ENCODE measurements at regions of chr5 and their contacts with region 1.

Region 1: GRCh38 chr5:57779383-57780223 is 297.0 kb upstream of the ACTBL2 start:
- DNase-seq: peak in 3 of 4 experiments; percentile 10 to 48 (median 11)
- ATAC-seq: peak; percentile 73
- H3K4me3 ChIP-seq: no peak overlapping the region
- H3K27ac ChIP-seq: no peak overlapping the region
- H3K4me1 ChIP-seq: no peaks in the 10 kb centered on the region
- H3K27me3 ChIP-seq: no peaks in the 10 kb centered on the region
- CTCF ChIP-seq: peak; percentile 44 to 61 (median 51); a peak in 5 of 6 replicates
- EP300 ChIP-seq: no peak
- POLR2A ChIP-seq: no peak
- RAD21 ChIP-seq: peak; percentile 64 to 75

Region 2: DNA sequence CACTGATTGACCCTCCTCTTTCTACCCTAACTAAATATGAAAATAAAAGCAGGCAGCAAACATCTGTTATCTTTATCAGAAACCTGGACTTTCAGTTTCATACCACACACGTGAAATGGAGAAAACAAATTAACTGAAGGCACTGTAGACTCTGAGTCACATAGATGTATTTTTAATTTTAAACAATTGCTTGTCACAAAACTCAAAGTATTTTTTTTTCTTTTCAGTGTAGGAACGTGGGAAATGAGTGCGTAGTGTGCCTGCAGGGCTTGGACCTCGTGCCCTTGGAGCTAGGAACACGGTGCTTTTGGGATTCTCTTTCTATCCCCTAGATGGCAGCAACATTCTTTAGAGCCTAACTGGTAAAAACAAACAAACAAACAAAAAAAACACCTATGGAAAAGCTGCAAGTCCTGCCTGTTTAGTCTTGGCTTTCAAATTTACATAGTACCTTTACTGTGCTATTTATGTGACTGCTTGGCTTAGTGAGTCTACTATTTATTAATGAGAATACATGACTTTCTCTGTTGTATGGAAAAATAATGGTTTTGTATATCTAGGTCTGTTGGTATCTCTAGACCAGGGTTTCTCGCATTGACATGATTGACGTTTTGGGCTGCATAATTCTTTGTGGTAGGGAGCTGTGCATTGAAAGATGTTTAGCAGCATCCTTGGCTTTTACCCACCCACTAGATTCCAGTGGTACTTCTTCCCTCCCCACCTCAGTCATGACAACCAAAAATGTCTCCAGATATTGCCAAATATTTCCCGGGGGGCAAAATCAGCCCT is 280.1 kb before region 1 on chr5:
- CTCF ChIA-PET with region 1: no interaction called
- POLR2A ChIA-PET with region 1: no interaction called
- in situ Hi-C with region 1: no loop called
- intact Hi-C with region 1: loop called (anchors 10 kb)
- DNase-seq: peak; percentile 39 to 47 (median 44)
- ATAC-seq: peak; percentile 79
- H3K4me3 ChIP-seq: no peak overlapping the region
- H3K27ac ChIP-seq: no peak overlapping the region
- H3K4me1 ChIP-seq: peaks cover 0 to 8% of the 10 kb centered on the region in 2 experiments; a peak in 4 of 5 replicates
- H3K27me3 ChIP-seq: no peaks in the 10 kb centered on the region
- CTCF ChIP-seq: peak; percentile 44 to 72 (median 66)
- EP300 ChIP-seq: no peak
- POLR2A ChIP-seq: no peak
- RAD21 ChIP-seq: peak; percentile 72 to 75

Region 3: GRCh38 chr5:57650360-57651069 is 129.1 kb before region 1 on chr5:
- CTCF ChIA-PET with region 1: no interaction called
- POLR2A ChIA-PET with region 1: no interaction called
- in situ Hi-C with region 1: no loop called
- intact Hi-C with region 1: loop called (anchors 10 kb)
- DNase-seq: peak; percentile 37 to 64 (median 54)
- ATAC-seq: peak; percentile 94
- H3K4me3 ChIP-seq: no peak overlapping the region
- H3K27ac ChIP-seq: no peak overlapping the region
- H3K4me1 ChIP-seq: no peaks in the 10 kb centered on the region
- H3K27me3 ChIP-seq: no peaks in the 10 kb centered on the region
- CTCF ChIP-seq: peak; percentile 60 to 78 (median 72)
- EP300 ChIP-seq: no peak
- POLR2A ChIP-seq: no peak
- RAD21 ChIP-seq: peak; percentile 43 to 78

Region 4: DNA sequence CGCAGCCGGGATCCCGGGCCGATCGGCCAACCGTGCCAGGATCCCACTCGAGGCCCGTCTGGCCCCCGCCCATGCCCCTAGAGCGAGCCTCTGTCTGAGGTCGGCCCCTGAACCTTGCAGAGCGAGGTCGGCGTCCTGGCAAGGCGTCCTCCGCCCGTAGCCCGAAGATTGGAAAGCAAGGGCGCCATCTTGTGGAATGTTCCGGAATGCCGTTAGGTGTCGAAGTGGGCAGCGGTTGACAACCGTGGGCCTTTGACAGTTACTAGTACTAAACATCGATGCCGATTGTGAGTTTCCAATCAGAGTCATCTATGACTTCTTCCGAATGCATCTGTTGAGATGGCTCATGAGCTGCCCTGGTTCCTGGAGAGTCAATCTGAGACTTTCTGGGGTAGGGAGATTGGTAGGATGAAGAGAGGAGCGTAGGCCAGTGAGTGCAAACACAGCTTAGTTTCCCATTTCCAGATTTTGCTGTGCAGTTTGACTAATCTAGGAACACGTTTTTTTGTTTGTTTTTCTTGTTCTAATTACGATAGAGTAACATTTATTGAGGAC is 681.2 kb after region 1 on chr5:
- CTCF ChIA-PET with region 1: interaction called, 12 read pairs
- POLR2A ChIA-PET with region 1: no interaction called
- in situ Hi-C with region 1: loop called (anchors 25 kb)
- intact Hi-C with region 1: loop called (anchors 1 kb)
- DNase-seq: peak; percentile 19 to 33 (median 23)
- ATAC-seq: peak; percentile 82
- H3K4me3 ChIP-seq: no peak overlapping the region
- H3K27ac ChIP-seq: no peak overlapping the region
- H3K4me1 ChIP-seq: peaks cover 0 to 12% of the 10 kb centered on the region in 2 experiments; a peak in 1 of 5 replicates
- H3K27me3 ChIP-seq: no peaks in the 10 kb centered on the region
- CTCF ChIP-seq: peak; percentile 56 to 62 (median 60)
- EP300 ChIP-seq: no peak
- POLR2A ChIP-seq: no peak
- RAD21 ChIP-seq: peak; percentile 52 to 79